ENCODE measurements at regions of chr6 and their contacts with region 1.

Region 1: GRCh38 chr6:47780510-47781356 is 1.1 kb upstream of the OPN5 start:
- DNase-seq: peak; percentile 23
- H3K4me3 ChIP-seq: peak overlapping the region in 1 of 2 experiments; percentile 0; a peak in 1 of 4 replicates
- H3K27ac ChIP-seq: no peak overlapping the region
- H3K4me1 ChIP-seq: no peaks in the 10 kb centered on the region
- H3K27me3 ChIP-seq: peaks cover 25% of the 10 kb centered on the region; the same call in 1 of the 2 replicates
- CTCF ChIP-seq: peak; percentile 77
- EP300 ChIP-seq: no peak
- RAD21 ChIP-seq: peak; percentile 72

Region 2: DNA sequence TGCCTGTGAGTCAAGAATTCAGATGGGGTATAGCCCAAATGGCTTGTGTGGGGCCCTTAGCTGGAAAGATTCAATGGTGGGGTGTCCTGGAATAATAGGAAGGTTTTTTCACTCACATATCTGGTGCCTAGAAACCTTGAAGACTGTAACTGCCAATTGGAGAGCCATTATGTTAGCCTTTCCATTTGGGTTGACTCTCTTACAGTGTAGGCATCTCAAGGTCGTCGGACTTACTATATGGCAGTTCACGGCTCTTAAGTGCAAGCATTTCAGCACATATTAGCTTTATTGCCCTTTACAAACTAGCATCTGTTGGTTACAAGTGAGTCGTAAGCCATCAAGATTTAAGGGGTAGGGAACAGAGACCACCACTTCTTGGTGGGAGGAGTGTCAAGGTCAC is 229.1 kb before region 1 on chr6:
- CTCF ChIA-PET with region 1: no interaction called
- POLR2A ChIA-PET with region 1: no interaction called
- DNase-seq: no peak
- H3K4me3 ChIP-seq: no peak overlapping the region
- H3K27ac ChIP-seq: no peak overlapping the region
- H3K4me1 ChIP-seq: no peaks in the 10 kb centered on the region
- H3K27me3 ChIP-seq: no peaks in the 10 kb centered on the region
- CTCF ChIP-seq: no peak
- EP300 ChIP-seq: no peak
- RAD21 ChIP-seq: no peak

Region 3: DNA sequence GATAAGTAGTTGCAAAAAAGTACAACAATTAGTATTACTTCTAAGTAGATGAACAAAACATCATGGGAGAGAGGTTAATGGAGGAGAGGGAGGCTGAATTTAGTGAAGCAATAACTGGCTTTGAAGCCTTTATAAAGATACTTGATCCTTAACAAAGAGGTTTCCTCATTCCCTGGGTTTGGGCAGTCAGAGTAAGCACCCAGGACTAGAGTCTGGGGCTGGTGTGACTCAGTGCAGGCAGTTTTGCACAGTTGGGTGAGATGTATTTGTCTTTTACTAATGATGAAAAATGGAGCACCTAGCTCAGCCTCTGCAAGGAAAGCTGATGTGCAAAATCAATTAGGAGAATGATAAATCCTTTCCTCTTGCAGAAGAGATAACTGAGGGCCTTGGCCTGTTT is 10.8 kb before region 1 on chr6:
- CTCF ChIA-PET with region 1: interaction called, 12 read pairs
- POLR2A ChIA-PET with region 1: no interaction called
- DNase-seq: no peak
- H3K4me3 ChIP-seq: no peak overlapping the region
- H3K27ac ChIP-seq: no peak overlapping the region
- H3K4me1 ChIP-seq: no peaks in the 10 kb centered on the region
- H3K27me3 ChIP-seq: peaks cover 12% of the 10 kb centered on the region; the same call in 1 of the 2 replicates
- CTCF ChIP-seq: no peak
- EP300 ChIP-seq: no peak
- RAD21 ChIP-seq: no peak

Measured in SK-N-SH (cell line).